ENCODE measurements at regions of chr17 and their contacts with region 1.

Region 1: DNA sequence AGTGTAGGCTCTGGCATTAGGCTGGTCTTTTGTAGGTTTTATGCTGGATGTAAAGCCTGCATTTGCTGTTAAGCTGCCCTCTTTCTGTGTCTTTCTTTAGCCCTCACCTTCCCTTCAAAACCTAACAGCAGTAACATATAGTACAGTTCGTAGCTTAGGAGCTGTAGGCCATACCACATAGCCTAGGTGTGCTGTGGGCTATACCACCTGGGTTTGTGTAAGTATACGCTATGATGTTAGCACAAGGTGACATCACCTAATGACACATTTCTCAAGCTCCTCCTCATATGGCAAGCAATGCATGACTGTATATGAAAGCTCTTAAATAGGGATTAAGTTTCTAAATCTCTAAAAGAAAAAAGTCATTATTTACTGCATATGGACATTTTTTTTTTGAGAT is 57.8 kb upstream of the TMEM97 start:
- DNase-seq: no peak
- ATAC-seq: no peak
- H3K4me3 ChIP-seq: no peak overlapping the region
- H3K27ac ChIP-seq: no peak overlapping the region
- H3K4me1 ChIP-seq: no peaks in the 10 kb centered on the region
- H3K27me3 ChIP-seq: no peaks in the 10 kb centered on the region
- CTCF ChIP-seq: no peak

Region 2: DNA sequence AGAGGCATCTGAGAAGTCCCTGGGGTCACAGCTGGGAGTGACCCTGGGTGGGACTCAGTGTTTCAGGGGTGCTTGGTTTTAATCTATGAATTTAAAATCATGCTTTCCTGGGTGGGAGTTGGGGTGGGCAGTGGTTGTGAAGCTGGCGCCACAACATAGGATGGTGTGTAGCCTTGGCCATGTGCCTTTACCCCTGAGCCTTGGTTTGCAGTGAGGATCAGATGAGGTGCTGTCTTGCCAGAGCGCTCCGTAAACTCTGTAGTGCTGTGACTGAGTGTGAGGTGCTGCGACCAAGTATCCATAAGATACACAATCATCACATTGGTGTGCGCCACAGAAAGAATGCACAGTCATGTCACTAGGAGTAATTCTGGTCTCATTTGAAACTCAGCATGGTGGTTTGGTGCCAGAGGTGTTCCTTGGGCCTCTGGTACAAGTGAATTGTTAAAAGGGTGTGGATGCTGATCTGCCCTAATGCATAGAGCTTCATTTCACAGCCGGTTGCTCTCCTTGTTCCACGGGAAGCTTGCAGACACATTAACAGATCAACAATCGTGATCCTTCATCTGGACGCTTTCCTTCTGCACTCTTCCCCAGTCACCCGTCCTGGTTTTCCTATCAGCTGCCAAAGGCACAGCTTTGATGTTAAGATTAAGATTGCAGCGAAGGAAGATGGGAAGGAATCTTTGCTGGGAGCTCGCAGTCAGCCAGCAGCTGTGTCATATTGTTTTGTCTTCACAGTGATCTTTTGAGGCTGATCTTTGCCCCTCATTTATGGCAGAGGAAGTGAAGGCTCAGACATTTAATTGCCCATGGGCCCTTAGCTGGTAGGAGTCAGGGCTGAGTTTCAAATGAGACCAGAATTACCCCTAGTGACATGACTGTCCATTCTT is 725.9 kb before region 1 on chr17:
- CTCF ChIA-PET with region 1: interaction called, 11 read pairs
- POLR2A ChIA-PET with region 1: no interaction called
- in situ Hi-C with region 1: no loop called
- intact Hi-C with region 1: no loop called
- DNase-seq: no peak
- ATAC-seq: no peak
- H3K4me3 ChIP-seq: no peak overlapping the region
- H3K27ac ChIP-seq: peak overlapping the region; percentile 31
- H3K4me1 ChIP-seq: peaks cover 16% of the 10 kb centered on the region
- H3K27me3 ChIP-seq: no peaks in the 10 kb centered on the region
- CTCF ChIP-seq: no peak

Region 3: DNA sequence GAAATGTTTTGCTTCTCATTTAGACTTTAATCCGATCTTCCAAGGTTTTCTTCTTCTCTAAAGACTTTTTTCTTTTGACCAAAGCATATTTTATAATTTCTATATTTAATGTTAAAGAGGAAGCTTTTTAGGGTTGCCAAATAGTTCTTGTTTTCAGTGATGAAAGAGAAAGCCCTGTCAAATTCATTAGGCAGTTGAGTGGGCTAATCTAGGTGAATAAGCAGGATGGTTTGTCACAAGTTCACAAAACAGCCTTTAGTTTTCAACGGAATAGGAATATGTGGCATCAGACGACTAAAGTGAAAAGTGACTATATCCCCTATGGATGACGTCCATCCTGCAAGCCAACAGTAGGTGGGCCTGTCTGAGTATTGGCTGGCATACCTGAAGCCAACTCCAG is 99.9 kb before region 1 on chr17:
- CTCF ChIA-PET with region 1: no interaction called
- POLR2A ChIA-PET with region 1: no interaction called
- in situ Hi-C with region 1: no loop called
- intact Hi-C with region 1: no loop called
- DNase-seq: no peak
- ATAC-seq: no peak
- H3K4me3 ChIP-seq: no peak overlapping the region
- H3K27ac ChIP-seq: no peak overlapping the region
- H3K4me1 ChIP-seq: no peaks in the 10 kb centered on the region
- H3K27me3 ChIP-seq: no peaks in the 10 kb centered on the region
- CTCF ChIP-seq: no peak

Measured in Panc1 (cell line).